ENCODE measurements at regions of chr1 and their contacts with region 1.

Region 1: DNA sequence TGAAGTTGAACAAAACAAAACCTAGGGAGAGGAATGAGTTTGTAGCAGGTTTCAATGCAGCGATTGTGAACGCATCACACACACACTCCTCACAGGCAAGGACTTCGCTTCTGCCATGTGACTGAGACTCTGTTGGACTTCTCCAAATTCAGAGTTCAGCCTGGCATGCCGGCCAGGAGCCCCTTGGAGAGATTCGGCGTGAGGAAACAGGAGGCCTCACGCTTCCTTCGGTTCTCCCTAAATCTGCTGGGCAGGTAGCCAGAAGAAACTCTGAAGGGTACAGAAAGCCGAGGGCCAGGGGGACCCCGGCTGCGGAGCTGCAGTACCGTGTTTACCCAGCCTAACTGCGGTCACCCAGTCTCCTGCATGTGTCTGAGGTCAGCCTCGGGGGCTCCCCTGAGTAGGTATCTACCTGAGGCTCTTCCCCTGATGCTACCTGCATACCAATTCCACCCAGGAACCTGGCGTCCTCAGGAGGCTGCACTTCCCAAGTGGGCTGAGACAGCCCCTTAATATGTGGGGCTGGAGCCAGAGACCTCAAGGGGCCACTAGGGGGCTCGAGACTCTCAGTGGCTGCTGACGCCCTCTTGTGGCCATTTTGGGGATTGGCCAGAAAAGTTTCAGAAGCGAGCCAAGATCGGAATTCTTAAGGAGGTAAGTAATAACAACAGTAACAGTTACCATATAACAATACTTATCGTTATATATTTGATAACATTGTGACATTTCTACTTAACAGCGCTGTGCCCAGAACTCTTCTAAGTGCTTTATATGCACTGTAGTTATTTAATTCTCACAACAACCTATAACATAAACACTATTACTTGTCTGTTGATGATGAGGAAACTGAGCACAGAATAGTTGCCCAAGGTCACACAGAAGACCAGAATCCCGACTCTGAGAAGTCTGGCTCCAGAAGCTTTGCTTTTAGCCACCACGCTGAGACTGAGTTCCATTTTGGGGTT is 2.7 kb upstream of the ANXA9 start:
- DNase-seq: peak; percentile 94
- H3K4me3 Mint-ChIP-seq: peak overlapping the region; percentile 38
- H3K27ac Mint-ChIP-seq: peak overlapping the region; percentile 37
- H3K4me1 Mint-ChIP-seq: peaks cover 44% of the 10 kb centered on the region
- H3K27me3 Mint-ChIP-seq: peaks cover 27% of the 10 kb centered on the region

Region 2: DNA sequence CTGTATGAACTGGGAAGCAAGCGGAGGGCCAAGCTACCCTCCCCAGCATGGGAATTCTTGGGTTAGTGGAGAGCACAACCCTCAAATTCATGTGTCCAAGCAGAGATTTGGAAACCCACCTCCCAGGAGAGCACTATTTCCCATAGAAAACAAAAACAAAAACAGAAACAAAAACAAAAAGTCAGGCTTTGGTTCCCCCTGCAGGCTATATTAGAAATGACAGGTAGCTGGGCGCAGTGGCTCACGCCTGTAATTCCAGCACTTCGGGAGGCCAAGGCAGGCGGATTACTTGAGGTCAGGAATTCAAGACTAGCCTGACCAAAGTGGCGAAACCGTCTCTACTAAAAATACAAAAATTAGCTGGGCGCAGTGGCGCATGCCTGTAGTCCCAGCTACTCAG is 16.5 kb after region 1 on chr1:
- CTCF ChIA-PET with region 1: interaction called, 89 read pairs
- DNase-seq: peak; percentile 52
- H3K4me3 Mint-ChIP-seq: no peak overlapping the region
- H3K27ac Mint-ChIP-seq: peak overlapping the region; percentile 52
- H3K4me1 Mint-ChIP-seq: peaks cover 18% of the 10 kb centered on the region
- H3K27me3 Mint-ChIP-seq: no peaks in the 10 kb centered on the region

Measured in activated naive CD4-positive, alpha-beta T cell treated with anti-CD3 and anti-CD28 coated beads, Interleukin-2, amount 10 ng/mL, durations not matched to agents 7 days and 5 days (primary cell).